ENCODE measurements at regions of chr10 and their contacts with region 1.

Region 1: GRCh38 chr10:55410415-55410885 is 609.4 kb upstream of the PCDH15 start:
- DNase-seq: peak; percentile 25
- ATAC-seq: peak; percentile 88
- H3K4me3 ChIP-seq: no peak overlapping the region
- H3K27ac ChIP-seq: no peak overlapping the region
- H3K4me1 ChIP-seq: no peaks in the 10 kb centered on the region
- H3K27me3 ChIP-seq: no peaks in the 10 kb centered on the region
- CTCF ChIP-seq: peak; percentile 24; the same call in 1 of the 2 replicates

Region 2: DNA sequence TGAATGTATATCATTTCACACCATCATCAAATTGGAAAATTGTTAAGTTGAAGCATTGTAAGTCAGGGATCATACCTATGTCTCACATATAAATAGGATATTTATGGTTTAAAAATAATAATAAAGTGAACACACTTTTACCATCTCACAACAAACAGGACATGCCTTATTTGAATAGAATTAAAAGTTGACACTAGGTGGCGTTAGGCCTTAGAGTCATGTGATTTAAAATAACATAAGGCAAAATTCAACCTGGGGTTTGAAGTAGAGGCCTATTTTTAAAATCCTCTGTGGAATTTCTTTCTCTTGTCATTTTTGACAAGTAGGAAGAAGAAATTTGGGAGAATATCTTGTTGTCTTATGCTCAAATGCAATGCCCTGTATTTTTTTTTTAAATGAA is 424.7 kb before region 1 on chr10:
- CTCF ChIA-PET with region 1: no interaction called
- POLR2A ChIA-PET with region 1: no interaction called
- intact Hi-C with region 1: loop called (anchors 10 kb)
- DNase-seq: peak; percentile 72
- ATAC-seq: peak; percentile 73
- H3K4me3 ChIP-seq: no peak overlapping the region
- H3K27ac ChIP-seq: no peak overlapping the region
- H3K4me1 ChIP-seq: no peaks in the 10 kb centered on the region
- H3K27me3 ChIP-seq: no peaks in the 10 kb centered on the region
- CTCF ChIP-seq: peak; percentile 90

Region 3: GRCh38 chr10:55272886-55273285 is 137.6 kb before region 1 on chr10:
- CTCF ChIA-PET with region 1: no interaction called
- POLR2A ChIA-PET with region 1: no interaction called
- intact Hi-C with region 1: no loop called
- DNase-seq: no peak
- ATAC-seq: no peak
- H3K4me3 ChIP-seq: no peak overlapping the region
- H3K27ac ChIP-seq: no peak overlapping the region
- H3K4me1 ChIP-seq: no peaks in the 10 kb centered on the region
- H3K27me3 ChIP-seq: no peaks in the 10 kb centered on the region
- CTCF ChIP-seq: no peak

Region 4: GRCh38 chr10:55476129-55476528 is 65.7 kb after region 1 on chr10:
- CTCF ChIA-PET with region 1: no interaction called
- POLR2A ChIA-PET with region 1: no interaction called
- intact Hi-C with region 1: no loop called
- DNase-seq: no peak
- ATAC-seq: no peak
- H3K4me3 ChIP-seq: no peak overlapping the region
- H3K27ac ChIP-seq: no peak overlapping the region
- H3K4me1 ChIP-seq: no peaks in the 10 kb centered on the region
- H3K27me3 ChIP-seq: no peaks in the 10 kb centered on the region
- CTCF ChIP-seq: no peak

Region 5: GRCh38 chr10:55500932-55501559 is 90.6 kb after region 1 on chr10:
- CTCF ChIA-PET with region 1: no interaction called
- POLR2A ChIA-PET with region 1: no interaction called
- intact Hi-C with region 1: loop called (anchors 5 kb)
- DNase-seq: peak; percentile 72
- ATAC-seq: peak; percentile 88
- H3K4me3 ChIP-seq: no peak overlapping the region
- H3K27ac ChIP-seq: no peak overlapping the region
- H3K4me1 ChIP-seq: no peaks in the 10 kb centered on the region
- H3K27me3 ChIP-seq: no peaks in the 10 kb centered on the region
- CTCF ChIP-seq: peak; percentile 90

Region 6: DNA sequence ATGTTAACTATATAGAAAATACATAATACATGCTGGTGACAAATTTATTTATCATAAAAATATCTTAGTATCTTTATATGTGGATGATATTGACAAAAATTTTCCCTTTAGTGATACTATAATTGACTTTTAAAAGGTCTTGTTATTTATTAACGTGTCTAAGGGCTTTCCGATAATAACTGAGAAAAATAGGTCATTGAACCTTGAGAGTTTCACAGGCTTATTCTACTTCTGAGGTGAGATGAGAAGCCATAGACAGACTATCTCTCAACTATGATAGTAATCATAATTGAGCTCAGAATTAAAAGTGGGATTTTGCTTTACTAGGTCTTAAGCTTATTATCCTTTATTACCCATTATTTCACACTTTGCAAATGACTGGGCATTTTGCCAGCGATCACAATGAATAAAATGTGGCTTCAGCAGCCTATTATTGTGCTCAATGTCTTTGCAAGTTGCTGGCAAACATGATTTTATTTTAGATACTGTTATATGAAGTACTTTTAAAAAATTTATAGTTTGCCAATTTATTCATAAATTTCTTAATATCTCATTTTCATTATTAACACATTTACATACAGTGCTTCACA is 376.1 kb after region 1 on chr10:
- CTCF ChIA-PET with region 1: no interaction called
- POLR2A ChIA-PET with region 1: no interaction called
- intact Hi-C with region 1: no loop called
- DNase-seq: no peak
- ATAC-seq: no peak
- H3K4me3 ChIP-seq: no peak overlapping the region
- H3K27ac ChIP-seq: no peak overlapping the region
- H3K4me1 ChIP-seq: no peaks in the 10 kb centered on the region
- H3K27me3 ChIP-seq: no peaks in the 10 kb centered on the region
- CTCF ChIP-seq: no peak

Region 7: DNA sequence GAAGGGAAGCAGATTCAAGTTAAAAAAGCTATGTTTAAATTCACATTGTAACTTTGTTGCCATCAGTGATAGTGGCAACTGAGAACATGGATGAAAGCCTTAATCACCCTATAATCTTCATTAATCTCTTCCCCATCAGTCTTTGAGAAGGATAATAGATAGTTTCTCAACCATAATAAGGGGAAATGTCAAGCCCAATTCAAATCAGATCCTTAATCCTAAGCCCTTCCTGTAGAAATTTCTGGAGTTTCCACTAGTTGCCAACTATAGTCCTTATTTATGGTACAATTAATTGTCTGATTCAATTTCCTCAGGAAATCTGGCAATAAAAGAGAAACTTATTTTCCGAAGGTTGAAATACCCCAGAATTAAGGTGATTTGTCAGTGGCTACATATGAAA is 518.8 kb after region 1 on chr10:
- CTCF ChIA-PET with region 1: no interaction called
- POLR2A ChIA-PET with region 1: no interaction called
- intact Hi-C with region 1: no loop called
- DNase-seq: no peak
- ATAC-seq: no peak
- H3K4me3 ChIP-seq: no peak overlapping the region
- H3K27ac ChIP-seq: no peak overlapping the region
- H3K4me1 ChIP-seq: no peaks in the 10 kb centered on the region
- H3K27me3 ChIP-seq: no peaks in the 10 kb centered on the region; the same call in 1 of the 2 replicates
- CTCF ChIP-seq: no peak